ENCODE measurements at regions of chr10 and their contacts with region 1.

Region 1: GRCh38 chr10:15901889-15902288 is 41.6 kb upstream of the MINDY3 start:
- DNase-seq: no peak
- H3K4me3 ChIP-seq: no peak overlapping the region
- H3K27ac ChIP-seq: no peak overlapping the region
- H3K4me1 ChIP-seq: no peaks in the 10 kb centered on the region
- H3K27me3 ChIP-seq: peaks cover 12% of the 10 kb centered on the region
- CTCF ChIP-seq: no peak
- POLR2A ChIP-seq: no peak

Region 2: DNA sequence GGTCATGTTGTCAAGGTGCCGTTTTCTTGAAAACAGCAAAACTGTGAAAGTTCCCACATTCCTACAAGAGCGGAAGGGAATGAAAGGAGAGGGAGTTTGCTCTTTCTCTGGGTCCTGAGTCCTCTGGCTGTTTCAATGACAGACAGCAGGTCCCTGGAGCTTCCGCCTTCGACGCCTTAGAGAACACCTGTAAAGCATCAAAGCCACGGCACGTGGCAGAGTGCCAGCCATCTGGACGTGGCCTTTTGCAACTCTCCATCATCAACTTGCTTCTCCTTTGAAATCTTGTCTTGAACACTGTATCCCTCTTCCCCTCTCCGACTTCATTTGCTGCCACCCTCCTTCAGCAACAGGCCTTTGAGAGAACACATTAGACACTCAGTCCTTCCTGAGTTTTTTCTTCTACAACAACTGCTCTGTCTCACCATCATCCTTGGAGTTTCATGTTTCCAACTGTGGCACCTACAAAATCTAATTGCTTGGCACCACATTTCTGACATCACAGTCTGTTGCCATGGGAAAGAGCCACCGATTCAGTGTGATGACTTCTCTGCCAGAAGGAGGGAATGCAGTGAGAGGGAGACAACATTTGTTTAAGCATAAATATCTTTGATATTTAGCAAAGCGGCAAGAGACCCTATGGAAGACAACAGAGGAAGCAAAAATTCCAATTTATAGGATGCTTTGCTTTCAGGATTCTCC is 330.0 kb after region 1 on chr10:
- intact Hi-C with region 1: no loop called
- DNase-seq: peak in 1 of 7 donors; percentile 54
- H3K4me3 ChIP-seq: no peak overlapping the region
- H3K27ac ChIP-seq: no peak overlapping the region
- H3K4me1 ChIP-seq: no peaks in the 10 kb centered on the region
- H3K27me3 ChIP-seq: no peaks in the 10 kb centered on the region
- CTCF ChIP-seq: no peak
- POLR2A ChIP-seq: no peak

Region 3: DNA sequence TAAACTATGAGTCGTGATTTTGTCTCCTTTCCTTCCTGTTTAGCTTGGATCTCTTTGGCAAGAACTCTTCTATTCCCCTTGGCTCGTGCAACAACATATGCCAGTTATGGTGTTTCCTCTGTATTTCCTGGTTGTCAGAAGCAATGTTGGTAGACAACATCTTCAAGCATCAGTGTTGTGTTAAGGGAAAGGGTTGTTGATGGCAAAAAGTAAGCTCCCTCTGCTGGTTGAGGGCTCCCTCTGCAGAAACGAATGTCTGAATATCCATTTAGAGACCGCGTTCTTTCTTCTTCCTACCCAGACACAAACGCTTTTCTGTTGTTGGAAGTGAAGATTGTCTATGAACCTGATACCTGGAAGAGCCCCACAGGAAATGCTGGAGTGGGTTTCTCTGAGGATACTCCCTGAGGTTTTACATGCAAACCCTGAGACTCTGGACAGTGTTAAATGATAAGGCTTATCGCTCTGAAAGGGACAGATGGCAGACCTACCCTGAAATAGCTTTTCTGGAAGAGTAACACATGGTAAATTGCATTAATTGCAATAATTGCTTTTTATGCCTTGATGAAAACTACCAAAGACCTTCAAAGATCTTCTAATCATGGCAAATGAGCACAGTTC is 643.3 kb after region 1 on chr10:
- intact Hi-C with region 1: loop called in 1 of 2 experiments (anchors 10 kb)
- DNase-seq: peak in 4 of 7 donors; percentile 10 to 24 (median 16)
- H3K4me3 ChIP-seq: no peak overlapping the region
- H3K27ac ChIP-seq: no peak overlapping the region
- H3K4me1 ChIP-seq: no peaks in the 10 kb centered on the region
- H3K27me3 ChIP-seq: no peaks in the 10 kb centered on the region
- CTCF ChIP-seq: peak; percentile 53 to 67 (median 60)
- POLR2A ChIP-seq: no peak

Measured in adrenal gland (tissue), 19 donors.